Posterior cingulate gyrus (tissue), 11 donors: ENCODE measurements at regions of chr6 and their contacts with region 1.

Region 1: GRCh38 chr6:27177485-27178406 is 69.8 kb upstream of the PRSS16 start:
- DNase-seq: peak; percentile 68 to 97 (median 80)

Region 2: DNA sequence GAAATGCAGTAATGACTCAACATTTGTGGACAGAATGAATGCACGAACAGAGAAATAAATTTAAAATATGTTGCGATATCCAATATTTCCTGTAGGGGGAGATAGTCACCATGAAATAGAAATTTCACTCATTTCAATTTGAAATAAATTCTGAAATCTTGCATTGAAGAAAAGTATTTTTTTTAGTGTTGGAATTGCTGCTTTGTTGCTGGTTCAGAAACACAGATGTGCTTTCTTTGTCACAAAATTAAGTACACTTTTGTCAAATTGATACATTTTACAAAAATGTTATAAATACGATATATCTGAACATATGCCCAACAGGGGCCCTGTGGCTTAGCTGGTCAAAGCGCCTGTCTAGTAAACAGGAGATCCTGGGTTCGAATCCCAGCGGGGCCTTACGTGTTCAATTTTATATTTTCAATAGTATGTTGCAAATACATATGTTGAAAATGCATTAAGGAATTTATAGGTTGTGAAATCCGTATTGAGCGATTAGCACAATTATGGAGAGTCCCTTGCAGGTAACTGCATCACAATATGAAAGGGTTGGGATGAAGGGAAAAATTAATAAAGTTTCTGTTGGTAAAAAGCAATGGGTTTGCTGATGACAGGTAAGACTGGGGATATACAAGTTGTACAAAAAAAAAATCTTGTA is 15.7 kb before region 1 on chr6:
- intact Hi-C with region 1: loop called (anchors 2 kb)
- DNase-seq: peak in 5 of 10 donors; percentile 29 to 91 (median 52)

Region 3: GRCh38 chr6:27260369-27260768 is 82.6 kb after region 1 on chr6:
- intact Hi-C with region 1: no loop called
- DNase-seq: peak in 1 of 10 donors; percentile 84

Region 4: DNA sequence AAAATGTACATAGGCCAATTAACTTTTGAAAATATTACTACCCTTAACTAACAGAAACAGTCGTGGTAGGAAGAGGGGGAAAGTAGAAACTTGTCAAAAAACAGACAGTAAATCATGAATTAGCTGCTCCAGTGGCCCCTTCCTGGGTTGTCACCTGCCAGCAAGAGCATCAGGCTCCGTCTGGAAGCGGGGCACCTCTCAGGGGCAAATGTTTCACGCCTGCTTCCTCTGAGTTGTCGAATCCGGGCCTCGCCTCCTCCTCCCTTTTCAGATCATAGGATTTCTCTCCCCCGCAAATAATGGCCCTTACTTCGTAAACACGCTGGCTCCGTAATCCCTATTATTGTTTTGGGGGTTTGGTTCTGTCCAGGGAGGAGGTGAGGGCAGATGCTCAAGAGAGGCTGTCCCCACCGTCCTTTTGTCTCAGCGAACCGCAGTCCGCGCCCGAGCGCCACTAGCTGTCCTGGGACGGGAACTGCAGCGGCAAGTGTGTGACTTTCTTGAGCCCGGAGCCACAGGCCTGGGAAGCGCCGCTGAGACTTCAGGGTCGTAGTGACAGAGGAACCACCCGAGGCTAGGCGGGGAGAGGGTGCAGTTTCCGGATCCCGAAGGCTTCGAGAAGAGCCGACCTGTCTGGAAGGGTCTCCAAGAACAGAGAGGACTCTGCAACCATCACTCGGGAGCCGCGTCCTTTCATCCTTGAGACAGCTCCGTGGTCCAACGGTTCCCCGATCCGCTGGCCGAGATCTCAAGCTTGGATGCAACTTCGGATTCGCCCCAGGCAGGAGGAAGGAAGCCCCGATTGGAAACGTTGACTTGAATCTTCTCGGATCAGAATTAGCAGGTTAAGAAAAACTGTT is 509.6 kb after region 1 on chr6:
- intact Hi-C with region 1: loop called (anchors 10 kb)
- DNase-seq: peak; percentile 67 to 97 (median 82)

Region 5: GRCh38 chr6:27753668-27754407 is 576.1 kb after region 1 on chr6:
- intact Hi-C with region 1: loop called (anchors 5 kb)
- DNase-seq: peak; percentile 39 to 95 (median 56)

Region 6: DNA sequence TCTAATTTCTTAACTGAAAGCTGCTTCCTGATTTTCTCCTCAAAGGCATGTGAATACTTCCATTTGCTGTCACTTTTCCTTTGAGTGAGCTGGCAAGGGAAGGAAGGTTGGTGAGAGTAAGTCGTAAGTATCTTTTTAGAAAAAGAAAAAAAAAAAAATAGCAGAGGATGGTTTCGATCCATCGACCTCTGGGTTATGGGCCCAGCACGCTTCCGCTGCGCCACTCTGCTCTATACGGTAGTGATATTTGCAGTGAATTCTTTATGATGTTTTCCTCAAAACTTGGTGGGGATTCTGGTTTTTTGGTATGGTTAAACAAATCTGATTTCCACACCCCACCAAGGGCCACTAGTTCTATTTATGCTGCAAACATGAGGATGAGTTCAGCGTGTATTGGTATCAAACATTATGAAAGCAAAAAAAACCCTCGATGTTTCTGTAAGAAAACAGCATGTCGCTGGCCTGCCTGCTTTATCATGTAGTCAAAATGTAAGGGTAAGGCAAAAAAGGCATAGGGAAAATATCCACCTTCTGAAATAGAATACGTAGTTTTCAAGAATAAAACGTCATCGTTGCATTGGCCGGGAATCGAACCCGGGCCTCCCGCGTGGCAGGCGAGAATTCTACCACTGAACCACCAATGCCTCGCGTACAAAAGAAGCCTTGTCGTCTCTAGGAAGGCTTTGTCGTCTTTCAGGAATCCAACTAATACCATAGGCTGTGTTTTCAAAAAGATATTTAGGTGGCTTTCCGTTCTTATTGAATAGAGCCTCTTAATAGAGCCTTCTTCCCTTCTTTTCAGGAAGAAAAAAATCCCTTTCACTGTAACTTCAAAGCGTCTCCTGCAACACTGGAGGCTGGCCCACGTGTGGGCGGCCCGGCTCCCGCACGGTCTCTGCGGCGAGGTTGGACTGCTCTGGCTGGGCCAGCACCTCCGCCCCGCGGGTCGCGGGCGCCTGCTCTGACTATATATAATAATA is 724.9 kb after region 1 on chr6:
- intact Hi-C with region 1: loop called (anchors 5 kb)
- DNase-seq: peak; percentile 74 to 96 (median 85)